SK-N-SH (cell line): ENCODE measurements at regions of chr10 and their contacts with region 1.

Region 1: GRCh38 chr10:110643653-110644597 is at the start of gene RBM20:
- DNase-seq: peak; percentile 91
- H3K4me3 ChIP-seq: peak within 1 kb of the TSS; percentile 62 to 80
- H3K27ac ChIP-seq: peak within 1 kb of the TSS in 1 of 2 experiments; percentile 76; a peak in 2 of 4 replicates
- H3K4me1 ChIP-seq: peaks cover 4 to 26% of the 10 kb centered on the region in 2 experiments; a peak in 3 of 4 replicates
- H3K27me3 ChIP-seq: no peaks in the 10 kb centered on the region
- CTCF ChIP-seq: 0 out of 2 replicates have a peak, but pooled peaks have one; percentile 14
- EP300 ChIP-seq: no peak
- RAD21 ChIP-seq: no peak
- polyA plus RNA-seq, gene RBM20: 0.64 and 0.67 TPM in 2 replicates

Region 2: GRCh38 chr10:110567201-110568054 is 76.5 kb before region 1 on chr10 and contains the start of gene SMC3:
- CTCF ChIA-PET with region 1: no interaction called
- POLR2A ChIA-PET with region 1: no interaction called
- DNase-seq: peak; percentile 88
- H3K4me3 ChIP-seq: peak within 1 kb of the TSS; percentile 86 to 96
- H3K27ac ChIP-seq: peak within 1 kb of the TSS; percentile 96 to 98
- H3K4me1 ChIP-seq: peaks cover 6 to 16% of the 10 kb centered on the region in 2 experiments
- H3K27me3 ChIP-seq: no peaks in the 10 kb centered on the region
- CTCF ChIP-seq: no peak
- EP300 ChIP-seq: peak in 1 of 2 experiments; percentile 26; a peak in 1 of 4 replicates
- RAD21 ChIP-seq: no peak
- polyA plus RNA-seq, gene SMC3: 8.0 and 10.1 TPM in 2 replicates

Region 3: GRCh38 chr10:110610308-110610774 is 33.6 kb before region 1 on chr10:
- CTCF ChIA-PET with region 1: interaction called, 15 read pairs
- POLR2A ChIA-PET with region 1: interaction called, 5 read pairs
- DNase-seq: peak; percentile 69
- H3K4me3 ChIP-seq: peak overlapping the region in 1 of 2 experiments; percentile 16; a peak in 1 of 4 replicates
- H3K27ac ChIP-seq: peak overlapping the region in 1 of 2 experiments; percentile 74; a peak in 2 of 4 replicates
- H3K4me1 ChIP-seq: peaks cover 0 to 11% of the 10 kb centered on the region in 2 experiments; a peak in 2 of 4 replicates
- H3K27me3 ChIP-seq: no peaks in the 10 kb centered on the region
- CTCF ChIP-seq: peak; percentile 92
- EP300 ChIP-seq: no peak
- RAD21 ChIP-seq: peak; percentile 94

Region 4: DNA sequence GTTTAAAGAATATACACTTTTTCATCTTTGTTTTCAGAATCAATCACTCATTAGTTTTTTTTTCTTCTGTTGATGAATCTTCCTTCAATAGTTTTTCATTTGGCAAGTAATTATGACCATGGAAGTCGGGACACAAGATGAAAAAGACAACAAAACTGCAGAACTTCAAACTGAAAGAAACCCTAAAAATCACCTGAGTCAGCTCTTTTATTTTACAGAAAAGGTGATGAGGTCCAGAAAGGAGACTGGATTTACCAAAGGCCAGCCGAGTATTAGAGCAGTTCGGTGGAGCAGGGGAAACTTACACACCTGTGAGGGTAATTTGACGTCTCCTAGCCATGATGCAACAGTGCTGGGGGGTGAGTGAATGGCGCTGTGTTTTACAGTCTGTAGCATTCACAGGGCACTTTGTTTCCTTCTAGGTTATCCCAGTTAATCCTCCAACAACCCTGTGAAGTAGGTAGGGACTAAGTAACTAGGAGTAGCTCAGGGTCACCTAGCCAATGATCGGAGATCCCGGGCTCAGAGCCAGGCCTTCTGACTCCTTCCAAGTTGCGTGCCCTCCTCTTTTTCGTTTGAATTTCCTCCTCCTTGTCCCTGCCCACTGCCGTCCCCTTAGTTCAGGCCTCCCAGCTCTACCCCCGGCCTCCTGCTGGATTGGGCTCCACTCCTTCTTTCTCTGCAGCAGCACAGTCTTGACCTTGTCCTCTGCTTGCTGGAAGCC is 14.2 kb after region 1 on chr10:
- CTCF ChIA-PET with region 1: interaction called, 11 read pairs
- POLR2A ChIA-PET with region 1: no interaction called
- DNase-seq: no peak
- H3K4me3 ChIP-seq: no peak overlapping the region
- H3K27ac ChIP-seq: no peak overlapping the region
- H3K4me1 ChIP-seq: peaks cover 0 to 2% of the 10 kb centered on the region in 2 experiments; a peak in 2 of 4 replicates
- H3K27me3 ChIP-seq: no peaks in the 10 kb centered on the region
- CTCF ChIP-seq: no peak
- EP300 ChIP-seq: no peak
- RAD21 ChIP-seq: no peak

Region 5: DNA sequence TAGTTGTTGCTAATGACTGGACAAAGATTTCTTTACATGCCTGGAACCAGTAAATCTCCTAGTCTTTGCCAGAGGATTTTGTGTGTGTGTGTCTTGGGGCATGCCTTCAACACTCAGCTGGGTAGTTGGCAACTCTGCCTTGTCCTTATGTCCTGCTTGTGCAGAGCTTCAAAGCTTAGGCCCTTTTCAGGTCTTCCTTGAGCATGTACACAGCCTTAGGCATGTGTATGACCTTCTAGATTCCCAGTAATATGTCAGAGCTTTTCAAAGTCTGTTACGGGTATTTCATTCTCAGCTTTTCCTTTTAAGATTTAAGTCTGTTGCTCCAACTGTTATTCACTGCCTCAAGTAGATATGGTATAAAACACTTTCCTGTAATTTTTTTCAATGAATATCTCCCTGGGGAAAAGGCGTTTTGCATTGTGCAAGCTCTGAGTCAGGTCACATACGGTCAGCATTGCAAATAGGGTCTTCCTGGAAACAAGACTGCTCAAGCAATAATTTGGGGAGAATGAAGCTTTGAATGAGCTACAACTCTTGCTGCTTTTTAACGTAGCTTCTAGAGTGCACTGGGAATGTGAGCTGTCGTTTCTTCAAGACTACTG is 301.0 kb after region 1 on chr10:
- CTCF ChIA-PET with region 1: no interaction called
- POLR2A ChIA-PET with region 1: no interaction called
- DNase-seq: no peak
- H3K4me3 ChIP-seq: no peak overlapping the region
- H3K27ac ChIP-seq: no peak overlapping the region
- H3K4me1 ChIP-seq: peaks cover 0 to 3% of the 10 kb centered on the region in 2 experiments; a peak in 1 of 4 replicates
- H3K27me3 ChIP-seq: no peaks in the 10 kb centered on the region
- CTCF ChIP-seq: no peak
- EP300 ChIP-seq: no peak
- RAD21 ChIP-seq: no peak